Activated CD4-positive, alpha-beta memory T cell treated with anti-CD3 and anti-CD28 coated beads for 36 hours (primary cell): ENCODE measurements at regions of chr12 and their contacts with region 1.

Region 1: GRCh38 chr12:62435303-62436163 is 31.1 kb upstream of the MON2 start:
- DNase-seq: peak; percentile 57
- H3K4me3 Mint-ChIP-seq: peak overlapping the region; percentile 72
- H3K27ac Mint-ChIP-seq: no peak overlapping the region
- H3K4me1 Mint-ChIP-seq: peaks cover 9% of the 10 kb centered on the region
- H3K27me3 Mint-ChIP-seq: peaks cover 15% of the 10 kb centered on the region

Region 2: GRCh38 chr12:62021811-62022210 is 413.7 kb before region 1 on chr12:
- CTCF ChIA-PET with region 1: no interaction called
- POLR2A ChIA-PET with region 1: no interaction called
- intact Hi-C with region 1: no loop called
- DNase-seq: no peak
- H3K4me3 Mint-ChIP-seq: no peak overlapping the region
- H3K27ac Mint-ChIP-seq: no peak overlapping the region
- H3K4me1 Mint-ChIP-seq: no peaks in the 10 kb centered on the region
- H3K27me3 Mint-ChIP-seq: peaks cover 1% of the 10 kb centered on the region

Region 3: GRCh38 chr12:62379026-62379722 is 56.4 kb before region 1 on chr12:
- CTCF ChIA-PET with region 1: no interaction called
- POLR2A ChIA-PET with region 1: no interaction called
- intact Hi-C with region 1: no loop called
- DNase-seq: no peak
- H3K4me3 Mint-ChIP-seq: no peak overlapping the region
- H3K27ac Mint-ChIP-seq: no peak overlapping the region
- H3K4me1 Mint-ChIP-seq: peaks cover 19% of the 10 kb centered on the region
- H3K27me3 Mint-ChIP-seq: no peaks in the 10 kb centered on the region

Region 4: GRCh38 chr12:62552906-62553556 is 117.5 kb after region 1 on chr12:
- CTCF ChIA-PET with region 1: interaction called, 15 read pairs
- POLR2A ChIA-PET with region 1: no interaction called
- intact Hi-C with region 1: no loop called
- DNase-seq: no peak
- H3K4me3 Mint-ChIP-seq: no peak overlapping the region
- H3K27ac Mint-ChIP-seq: no peak overlapping the region
- H3K4me1 Mint-ChIP-seq: no peaks in the 10 kb centered on the region
- H3K27me3 Mint-ChIP-seq: no peaks in the 10 kb centered on the region

Region 5: GRCh38 chr12:62603061-62603810 is 167.7 kb after region 1 on chr12:
- CTCF ChIA-PET with region 1: interaction called, 6 read pairs
- POLR2A ChIA-PET with region 1: interaction called, 4 read pairs
- intact Hi-C with region 1: loop called (anchors 10 kb)
- DNase-seq: peak; percentile 85
- H3K4me3 Mint-ChIP-seq: peak overlapping the region; percentile 84
- H3K27ac Mint-ChIP-seq: peak overlapping the region; percentile 99
- H3K4me1 Mint-ChIP-seq: peaks cover 35% of the 10 kb centered on the region
- H3K27me3 Mint-ChIP-seq: no peaks in the 10 kb centered on the region

Region 6: DNA sequence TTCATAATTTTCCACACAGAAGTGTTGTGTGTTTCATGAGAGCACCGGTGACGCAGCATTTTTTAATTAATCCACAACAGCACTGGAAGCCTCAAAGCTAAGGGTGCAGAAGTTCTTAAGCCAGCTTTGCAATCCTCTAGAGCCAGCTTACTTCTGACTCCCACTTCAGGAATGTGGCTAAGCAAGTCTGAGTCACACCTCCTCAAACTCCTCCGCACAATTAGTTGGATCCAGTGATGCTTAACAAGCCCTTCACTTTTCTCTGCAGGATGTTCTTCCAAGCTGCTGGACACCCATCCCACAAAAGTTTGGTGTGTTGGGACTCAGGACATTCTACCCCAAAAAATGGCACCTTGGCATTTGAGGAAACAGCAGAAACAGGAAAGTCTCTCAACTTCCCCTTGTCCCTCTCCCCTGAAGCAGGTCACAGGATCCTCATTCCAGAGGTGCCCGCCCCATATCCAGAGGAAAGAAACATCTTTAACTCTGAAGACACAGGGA is 289.5 kb after region 1 on chr12:
- CTCF ChIA-PET with region 1: no interaction called
- POLR2A ChIA-PET with region 1: no interaction called
- intact Hi-C with region 1: no loop called
- DNase-seq: no peak
- H3K4me3 Mint-ChIP-seq: no peak overlapping the region
- H3K27ac Mint-ChIP-seq: no peak overlapping the region
- H3K4me1 Mint-ChIP-seq: no peaks in the 10 kb centered on the region
- H3K27me3 Mint-ChIP-seq: peaks cover 2% of the 10 kb centered on the region

Region 7: DNA sequence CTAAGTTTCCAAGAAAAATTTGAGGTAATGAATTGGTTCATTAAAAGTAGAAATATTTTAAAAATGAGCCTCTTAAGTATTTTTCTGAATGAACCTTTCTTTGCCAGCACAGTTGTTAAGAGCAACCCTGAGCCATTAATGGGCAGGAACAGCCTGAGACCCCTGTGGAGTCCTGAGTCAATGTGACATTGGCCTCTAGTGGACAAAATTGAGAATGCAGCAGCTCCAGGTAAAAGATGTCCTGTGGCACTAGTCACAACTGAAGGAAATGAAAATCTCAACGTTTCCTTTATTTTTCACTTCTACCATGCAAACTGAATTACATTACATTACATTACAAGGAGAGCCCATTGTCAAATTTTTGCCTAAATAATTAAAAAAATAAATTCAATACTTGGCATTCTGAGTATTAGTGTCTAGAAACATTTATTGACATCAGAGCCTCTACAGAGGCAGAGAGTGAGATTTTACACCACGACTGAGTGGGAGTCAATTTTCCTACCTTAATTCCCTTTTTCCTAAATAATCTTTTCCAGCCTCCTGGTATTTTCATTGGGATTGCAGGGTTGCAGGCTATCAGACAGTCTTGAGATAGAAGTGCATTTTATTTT is 363.7 kb after region 1 on chr12:
- CTCF ChIA-PET with region 1: interaction called, 158 read pairs
- POLR2A ChIA-PET with region 1: no interaction called
- intact Hi-C with region 1: loop called (anchors 1 kb)
- DNase-seq: peak; percentile 48
- H3K4me3 Mint-ChIP-seq: no peak overlapping the region
- H3K27ac Mint-ChIP-seq: no peak overlapping the region
- H3K4me1 Mint-ChIP-seq: no peaks in the 10 kb centered on the region
- H3K27me3 Mint-ChIP-seq: peaks cover 4% of the 10 kb centered on the region

Region 8: DNA sequence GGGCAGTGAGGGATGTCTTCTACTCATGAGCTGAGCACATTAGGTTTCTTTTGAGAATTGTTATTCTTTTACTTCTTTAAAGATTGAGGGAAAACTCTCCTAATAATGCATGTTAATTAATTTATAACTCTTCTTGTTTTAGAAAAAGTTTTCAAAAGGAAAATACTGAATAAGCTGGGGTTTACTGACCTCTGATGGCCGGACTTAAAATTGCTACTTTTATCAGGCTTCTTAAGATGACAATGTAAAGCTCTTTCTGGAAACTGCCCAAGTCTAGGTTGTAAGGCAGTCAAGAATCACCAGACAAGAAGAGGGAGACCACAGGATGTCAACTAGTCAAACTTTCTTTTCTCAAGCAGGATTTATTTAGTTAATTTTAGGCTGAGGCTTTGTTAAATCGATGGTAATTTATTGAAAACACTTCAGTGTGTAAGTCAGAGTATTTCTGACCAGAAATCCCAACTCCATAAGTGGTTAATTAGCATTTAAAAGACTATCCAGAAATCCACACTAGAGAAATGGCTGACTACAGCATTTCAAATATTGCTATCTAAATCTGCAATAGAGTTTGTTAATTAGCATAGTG is 633.4 kb after region 1 on chr12:
- CTCF ChIA-PET with region 1: no interaction called
- POLR2A ChIA-PET with region 1: no interaction called
- intact Hi-C with region 1: loop called (anchors 5 kb)
- DNase-seq: no peak
- H3K4me3 Mint-ChIP-seq: no peak overlapping the region
- H3K27ac Mint-ChIP-seq: no peak overlapping the region
- H3K4me1 Mint-ChIP-seq: no peaks in the 10 kb centered on the region
- H3K27me3 Mint-ChIP-seq: no peaks in the 10 kb centered on the region